HCT116 (cell line): ENCODE measurements at regions of chr3 and their contacts with region 1.

Region 1: DNA sequence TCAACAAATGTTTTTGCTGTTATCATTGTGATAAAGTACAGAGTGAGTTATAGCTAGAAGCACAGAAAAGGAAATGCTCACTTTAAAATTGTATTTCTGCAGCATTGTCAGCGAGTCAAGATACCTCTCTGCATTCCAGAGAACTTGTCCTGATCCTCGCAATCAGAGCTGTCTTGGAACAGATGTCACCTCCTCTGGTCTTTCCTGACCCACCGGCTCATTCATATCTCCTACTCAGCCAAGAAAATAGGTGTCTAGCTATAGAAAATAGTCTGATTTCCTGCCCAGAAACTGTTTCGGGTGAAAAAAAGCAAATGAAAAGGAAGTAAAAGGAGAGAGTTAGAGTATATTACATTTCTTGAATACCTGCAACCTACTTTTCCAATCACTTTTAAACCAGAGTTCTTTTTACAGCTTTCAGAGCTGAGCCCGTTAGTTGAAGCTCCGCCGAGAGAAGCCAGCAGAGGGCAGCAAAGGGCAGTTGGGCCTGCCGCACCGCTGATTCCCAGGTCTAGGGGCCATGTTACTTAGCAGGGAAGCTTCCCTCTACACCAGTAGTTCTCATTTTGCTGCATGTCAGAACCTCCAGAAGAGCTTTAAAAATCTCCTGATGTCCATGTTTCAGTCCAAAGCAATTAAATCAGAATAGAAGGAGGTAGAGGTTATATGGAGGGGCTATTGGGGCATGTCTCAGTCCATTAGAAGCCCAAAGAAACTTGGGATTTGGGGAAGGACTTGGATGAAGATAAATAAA is 185.7 kb upstream of the THRB start:
- DNase-seq: peak; percentile 42
- ATAC-seq: peak; percentile 96
- H3K4me3 ChIP-seq: no peak overlapping the region
- H3K27ac ChIP-seq: no peak overlapping the region
- H3K4me1 ChIP-seq: peaks cover 0 to 6% of the 10 kb centered on the region in 2 experiments; a peak in 1 of 4 replicates
- H3K27me3 ChIP-seq: no peaks in the 10 kb centered on the region
- CTCF ChIP-seq: peak; percentile 48 to 93 (median 91); a peak in 5 of 6 replicates
- POLR2A ChIP-seq: no peak
- RAD21 ChIP-seq: peak; percentile 59

Region 2: GRCh38 chr3:24661175-24661584 is 19.2 kb before region 1 on chr3:
- CTCF ChIA-PET with region 1: interaction called, 10 read pairs
- POLR2A ChIA-PET with region 1: no interaction called
- RAD21 ChIA-PET with region 1: no interaction called
- intact Hi-C with region 1: no loop called
- DNase-seq: no peak
- ATAC-seq: no peak
- H3K4me3 ChIP-seq: no peak overlapping the region
- H3K27ac ChIP-seq: no peak overlapping the region
- H3K4me1 ChIP-seq: no peaks in the 10 kb centered on the region
- H3K27me3 ChIP-seq: no peaks in the 10 kb centered on the region
- CTCF ChIP-seq: no peak
- POLR2A ChIP-seq: no peak
- RAD21 ChIP-seq: no peak

Region 3: DNA sequence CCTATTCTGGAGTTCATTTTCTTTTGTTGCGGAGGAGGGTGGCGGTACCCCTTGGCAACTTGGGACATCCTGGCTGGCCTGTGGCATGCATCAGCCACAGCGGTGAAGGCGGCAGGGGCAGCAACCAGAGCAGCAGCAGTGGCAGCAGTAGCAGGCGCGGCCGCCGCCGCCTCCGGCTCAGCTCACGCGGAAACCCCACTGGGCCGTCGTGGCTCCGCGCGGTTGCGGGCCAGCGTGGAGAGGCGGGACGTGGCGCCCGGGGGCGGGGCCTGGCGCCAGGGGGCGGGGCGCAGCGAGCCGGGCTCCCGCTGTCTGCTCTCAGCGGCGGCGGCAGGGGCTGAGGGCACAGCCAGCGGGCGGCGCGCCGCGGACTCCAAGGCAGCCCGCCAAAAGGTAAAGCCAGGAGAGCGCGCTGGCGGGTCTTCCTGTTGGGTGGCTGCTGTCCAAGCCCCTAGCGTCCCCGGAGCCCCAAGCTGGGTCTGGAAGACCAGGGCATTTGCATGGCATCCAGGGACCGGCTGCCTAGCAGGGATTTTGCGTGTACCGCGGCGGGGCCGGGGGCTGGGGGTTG is 148.7 kb after region 1 on chr3:
- CTCF ChIA-PET with region 1: no interaction called
- POLR2A ChIA-PET with region 1: no interaction called
- RAD21 ChIA-PET with region 1: no interaction called
- intact Hi-C with region 1: no loop called
- DNase-seq: no peak
- ATAC-seq: no peak
- H3K4me3 ChIP-seq: no peak overlapping the region
- H3K27ac ChIP-seq: no peak overlapping the region
- H3K4me1 ChIP-seq: no peaks in the 10 kb centered on the region
- H3K27me3 ChIP-seq: peaks cover 9% of the 10 kb centered on the region; the same call in 1 of the 2 replicates
- CTCF ChIP-seq: no peak
- POLR2A ChIP-seq: no peak
- RAD21 ChIP-seq: no peak